HEK293T (cell line): ENCODE measurements at regions of chr10 and their contacts with region 1.

Region 1: DNA sequence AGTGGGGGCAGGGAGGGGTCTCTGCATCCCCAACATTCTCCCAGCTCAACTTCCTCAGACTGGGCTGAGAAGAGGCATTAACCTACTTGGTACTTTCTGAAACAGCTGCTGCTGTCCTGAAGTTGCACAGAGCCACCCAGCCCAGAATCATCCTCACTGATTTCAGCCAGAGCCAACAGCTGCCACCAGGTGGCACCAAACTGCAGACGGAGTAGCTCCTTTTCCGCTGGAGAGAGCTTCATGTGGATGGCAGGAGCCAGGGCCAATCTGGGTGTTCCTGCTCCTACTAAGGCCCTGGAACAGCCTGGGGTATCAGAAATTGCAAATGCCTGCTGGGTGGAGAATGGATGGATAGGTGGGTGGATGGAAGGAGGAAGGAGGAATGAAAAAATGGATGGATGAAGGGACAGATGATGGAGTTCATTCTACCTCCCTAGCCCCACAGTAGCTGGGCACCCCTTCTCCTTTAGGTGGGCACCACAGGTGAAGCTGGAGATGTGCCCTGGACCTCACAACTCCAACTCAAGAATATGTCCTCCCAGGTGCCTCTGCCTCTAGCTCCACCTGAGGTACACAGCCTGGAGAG is 11.8 kb upstream of the DRGX start:
- DNase-seq: peak; percentile 82

Region 2: DNA sequence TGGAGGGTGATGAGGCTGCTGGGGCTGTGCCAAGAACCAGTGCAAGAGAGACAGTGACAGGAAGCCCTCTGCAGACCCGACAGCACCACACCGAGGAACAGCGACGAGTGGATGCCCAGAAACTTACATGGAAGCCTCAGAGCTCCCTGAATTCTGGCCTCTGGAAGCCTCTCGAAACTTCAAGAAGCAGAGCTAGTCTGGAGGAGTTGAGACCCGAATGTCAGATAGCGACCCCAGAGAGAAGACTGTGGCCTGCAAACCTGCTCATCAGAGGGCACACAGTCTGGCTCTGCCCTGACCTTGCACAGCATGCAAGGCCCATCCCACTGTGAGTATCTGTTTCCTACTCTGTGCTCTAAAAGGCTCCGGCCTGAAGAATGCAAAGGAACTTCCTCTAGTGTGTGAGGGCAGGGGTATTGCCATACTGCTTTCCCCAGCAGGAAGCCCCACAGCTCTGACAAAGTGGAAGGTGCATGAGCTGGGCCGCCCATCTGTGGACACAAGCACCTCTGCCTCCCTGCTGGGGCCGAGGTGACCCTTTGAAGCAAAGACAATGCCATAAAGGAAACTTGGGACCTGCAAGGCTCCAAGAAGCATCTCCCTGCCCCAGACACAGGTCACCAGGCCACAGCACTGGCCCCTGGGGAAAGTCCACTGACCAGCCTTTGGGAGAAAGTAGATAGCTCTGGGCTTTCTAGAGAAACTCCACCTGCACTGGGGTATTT is 119.1 kb before region 1 on chr10:
- CTCF ChIA-PET with region 1: no interaction called
- POLR2A ChIA-PET with region 1: no interaction called
- DNase-seq: no peak

Region 3: GRCh38 chr10:49512121-49512809 is 104.6 kb after region 1 on chr10:
- CTCF ChIA-PET with region 1: interaction called, 32 read pairs
- POLR2A ChIA-PET with region 1: no interaction called
- DNase-seq: peak; percentile 40

Region 4: DNA sequence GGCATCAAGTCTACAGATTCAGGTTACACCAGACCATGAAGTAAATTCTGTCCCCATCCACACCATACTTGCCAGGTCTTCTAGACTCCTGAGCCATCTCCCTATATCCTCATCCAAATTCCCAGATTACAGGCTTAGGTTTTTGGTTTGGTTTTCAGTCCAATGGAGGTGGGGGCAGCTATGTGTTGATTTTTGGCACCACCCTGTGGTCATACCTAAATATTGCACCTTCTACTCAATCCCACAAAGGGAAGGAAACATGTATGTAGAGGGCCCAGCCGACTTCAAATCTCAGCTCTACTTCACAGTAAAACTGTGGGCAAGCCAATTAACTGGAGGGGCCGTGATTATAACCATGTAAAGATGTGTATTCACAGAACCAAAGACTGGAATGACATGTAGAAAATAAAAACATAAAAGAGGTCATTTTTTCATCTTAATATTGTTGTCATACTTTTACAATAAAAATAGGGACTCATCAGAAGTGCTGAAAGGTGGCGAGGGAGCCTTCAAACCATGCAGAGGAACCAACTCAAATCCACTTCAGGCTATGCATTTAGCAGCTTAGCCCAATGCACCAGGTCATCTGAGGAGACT is 111.4 kb after region 1 on chr10:
- CTCF ChIA-PET with region 1: interaction called, 13 read pairs
- POLR2A ChIA-PET with region 1: no interaction called
- DNase-seq: peak; percentile 66